ENCODE measurements at regions of chr9 and their contacts with region 1.

Region 1: DNA sequence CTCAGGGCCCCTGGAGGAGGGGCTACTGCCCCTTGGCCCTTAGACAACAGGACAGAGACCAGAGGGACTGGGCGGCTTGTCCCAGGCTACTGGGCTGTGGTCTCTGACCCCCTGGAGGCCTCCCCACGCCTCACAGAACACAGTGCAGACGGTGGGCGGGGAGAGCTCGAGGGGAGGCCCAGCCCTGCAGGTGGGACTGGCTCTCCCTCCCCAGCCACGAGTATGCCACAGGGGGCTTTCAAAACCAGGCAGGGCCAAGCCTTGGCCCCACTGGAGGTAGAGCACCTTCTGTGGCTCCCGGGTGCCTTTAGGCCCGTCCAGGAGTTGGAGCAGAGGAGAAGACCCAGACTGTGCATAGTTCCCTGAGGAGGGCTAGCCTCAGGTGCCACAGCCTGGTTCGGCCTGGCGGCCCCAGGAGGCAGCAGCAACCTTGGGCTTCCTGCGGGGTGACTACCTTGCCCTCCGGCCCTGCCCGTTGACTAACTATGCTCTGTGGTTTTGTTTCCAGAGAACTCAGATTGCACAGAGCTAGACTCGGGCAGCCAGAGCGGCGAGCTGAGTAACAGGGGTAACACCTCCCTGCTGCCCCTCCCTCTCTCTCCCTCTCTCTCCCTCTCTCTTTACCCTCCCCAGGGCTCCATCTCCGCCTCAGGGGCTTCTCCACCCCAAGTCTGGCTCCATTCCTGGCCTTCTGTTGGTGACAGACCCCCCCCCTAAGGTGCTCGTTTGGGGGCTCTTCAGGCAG is 15.5 kb downstream of the CARD19 start:
- DNase-seq: peak; percentile 25 to 46
- ATAC-seq: no peak
- H3K4me3 ChIP-seq: no peak overlapping the region
- H3K27ac ChIP-seq: no peak overlapping the region
- H3K4me1 ChIP-seq: peaks cover 14% of the 10 kb centered on the region
- H3K27me3 ChIP-seq: no peaks in the 10 kb centered on the region
- CTCF ChIP-seq: no peak

Region 2: DNA sequence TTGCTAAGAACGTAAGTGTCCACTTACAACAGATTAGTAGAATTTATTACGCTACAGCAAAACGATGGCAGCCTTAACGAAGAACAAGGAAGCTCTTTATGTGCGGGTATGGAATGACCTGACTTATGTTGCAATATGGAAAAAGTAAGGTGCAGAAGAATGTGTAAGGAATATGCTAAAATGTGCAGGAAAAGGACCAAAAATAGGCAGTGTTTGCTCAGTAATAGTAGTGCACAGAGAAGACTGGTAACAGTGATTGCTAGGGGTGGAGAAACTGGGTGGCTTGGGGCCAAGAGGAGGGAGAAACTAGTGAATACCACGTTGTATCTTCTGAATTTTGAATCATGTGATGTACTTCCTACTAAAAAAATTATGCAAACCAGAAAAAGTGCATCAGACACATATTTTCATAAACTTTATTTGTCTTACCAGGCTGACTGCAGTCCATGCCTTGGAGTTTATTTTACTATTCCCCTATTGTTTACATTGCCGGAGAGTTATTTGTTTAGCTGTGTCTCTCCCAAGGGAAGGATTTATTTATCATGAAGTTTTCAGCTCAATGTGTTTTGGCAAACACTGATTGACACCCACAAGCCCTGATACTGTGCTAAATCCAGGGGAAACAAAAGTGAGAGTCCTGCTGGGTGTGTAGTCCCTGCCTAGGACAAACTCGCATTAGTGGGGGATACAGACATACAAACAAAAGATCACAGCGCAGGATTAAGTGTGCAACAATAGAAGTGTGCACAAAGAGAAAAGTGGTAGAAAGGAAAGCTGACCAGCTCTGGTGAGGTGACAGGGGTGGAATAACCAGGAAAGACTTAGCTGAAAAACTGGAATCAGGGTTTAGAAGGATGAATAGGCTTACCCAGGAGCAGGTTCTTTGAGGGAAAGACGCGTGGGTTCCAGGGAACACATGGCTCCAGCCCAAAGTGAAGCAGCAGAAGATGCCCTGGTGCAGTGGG is 199.8 kb before region 1 on chr9:
- intact Hi-C with region 1: no loop called
- DNase-seq: no peak
- ATAC-seq: no peak
- H3K4me3 ChIP-seq: no peak overlapping the region
- H3K27ac ChIP-seq: no peak overlapping the region
- H3K4me1 ChIP-seq: no peaks in the 10 kb centered on the region
- H3K27me3 ChIP-seq: peaks cover 0 to 2% (median 0%) of the 10 kb centered on the region in 3 donors
- CTCF ChIP-seq: no peak

Region 3: DNA sequence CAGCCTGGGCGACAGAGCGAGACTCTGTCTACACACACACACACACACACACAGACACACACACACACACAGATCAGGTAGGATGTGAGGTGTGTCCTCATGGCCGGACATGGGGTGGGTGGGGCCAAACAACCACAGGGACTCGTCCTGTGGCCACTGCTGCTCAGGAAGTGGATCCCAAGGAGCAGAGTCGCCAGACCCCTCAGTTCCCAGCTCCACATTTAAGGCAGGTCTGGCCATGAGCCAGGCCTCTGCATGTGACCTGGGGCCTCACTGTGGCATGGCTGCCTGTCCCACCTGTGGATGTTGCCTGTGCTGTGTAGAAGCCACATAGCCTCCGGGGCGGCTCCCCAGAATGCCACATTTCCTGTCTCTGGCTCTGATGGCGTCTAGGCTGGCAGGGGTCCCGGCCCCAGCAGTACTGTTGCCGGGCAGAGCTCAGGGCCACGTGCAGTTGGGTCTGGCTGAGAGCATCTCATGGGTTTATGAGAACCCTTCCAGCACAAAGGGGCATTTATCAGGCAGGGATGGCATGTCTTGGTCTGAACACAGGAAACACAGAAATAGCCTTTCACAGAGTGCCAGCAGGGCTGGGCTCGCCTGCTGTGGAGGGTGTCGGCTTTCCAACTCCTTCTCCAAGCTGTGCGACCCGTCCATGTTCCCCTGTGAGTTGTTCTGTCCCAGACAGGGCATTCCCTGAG is 32.4 kb after region 1 on chr9:
- intact Hi-C with region 1: loop called (anchors 1 to 5 kb)
- DNase-seq: peak; percentile 40 to 83
- ATAC-seq: peak; percentile 73 to 85 (median 80)
- H3K4me3 ChIP-seq: no peak overlapping the region
- H3K27ac ChIP-seq: peak overlapping the region; percentile 76
- H3K4me1 ChIP-seq: peaks cover 14% of the 10 kb centered on the region
- H3K27me3 ChIP-seq: no peaks in the 10 kb centered on the region
- CTCF ChIP-seq: no peak

Region 4: DNA sequence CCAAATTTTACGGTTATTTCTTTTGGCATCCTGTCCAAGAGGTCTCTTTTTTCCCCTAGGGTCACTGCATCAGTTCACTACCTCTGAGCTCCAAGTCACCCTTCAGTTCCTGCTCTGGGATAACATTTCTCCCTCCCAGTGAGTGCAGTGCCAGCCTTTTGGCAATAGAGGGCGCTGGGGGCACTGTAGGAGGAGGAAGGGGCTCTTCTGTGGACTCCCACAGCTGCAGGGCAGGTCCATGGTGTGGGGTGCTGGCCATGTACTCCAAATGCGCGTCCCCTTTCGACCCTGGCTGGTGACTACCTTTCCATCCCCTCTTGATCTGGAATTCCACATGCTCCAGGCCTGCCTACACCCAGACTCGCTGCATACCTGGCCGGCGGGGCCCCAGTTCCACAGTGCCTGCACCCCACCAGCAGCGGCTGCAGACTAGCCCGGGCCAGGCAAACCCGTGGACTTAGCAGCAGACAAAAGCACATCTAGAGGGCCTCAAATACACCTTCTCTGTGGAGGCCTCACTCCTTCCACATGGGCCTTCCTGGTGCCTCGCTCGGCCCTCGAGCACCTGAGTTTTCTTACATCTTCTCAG is 42.9 kb after region 1 on chr9:
- intact Hi-C with region 1: no loop called
- DNase-seq: no peak
- ATAC-seq: peak; percentile 33 to 62 (median 45)
- H3K4me3 ChIP-seq: no peak overlapping the region
- H3K27ac ChIP-seq: no peak overlapping the region
- H3K4me1 ChIP-seq: no peaks in the 10 kb centered on the region
- H3K27me3 ChIP-seq: no peaks in the 10 kb centered on the region
- CTCF ChIP-seq: peak; percentile 40

Region 5: GRCh38 chr9:93302551-93303257 is 191.2 kb after region 1 on chr9:
- intact Hi-C with region 1: loop called (anchors 2 to 5 kb)
- DNase-seq: peak in 1 of 2 donors; percentile 47
- ATAC-seq: peak in 1 of 4 donors; percentile 42
- H3K4me3 ChIP-seq: no peak overlapping the region
- H3K27ac ChIP-seq: no peak overlapping the region
- H3K4me1 ChIP-seq: peaks cover 48% of the 10 kb centered on the region
- H3K27me3 ChIP-seq: no peaks in the 10 kb centered on the region
- CTCF ChIP-seq: peak; percentile 44